ENCODE measurements at regions of chr6 and their contacts with region 1.

Region 1: GRCh38 chr6:5058254-5058653 is 26.9 kb upstream of the PPP1R3G start:
- DNase-seq: no peak

Region 2: GRCh38 chr6:4901386-4902061 is 156.7 kb before region 1 on chr6:
- intact Hi-C with region 1: no loop called
- DNase-seq: no peak

Region 3: DNA sequence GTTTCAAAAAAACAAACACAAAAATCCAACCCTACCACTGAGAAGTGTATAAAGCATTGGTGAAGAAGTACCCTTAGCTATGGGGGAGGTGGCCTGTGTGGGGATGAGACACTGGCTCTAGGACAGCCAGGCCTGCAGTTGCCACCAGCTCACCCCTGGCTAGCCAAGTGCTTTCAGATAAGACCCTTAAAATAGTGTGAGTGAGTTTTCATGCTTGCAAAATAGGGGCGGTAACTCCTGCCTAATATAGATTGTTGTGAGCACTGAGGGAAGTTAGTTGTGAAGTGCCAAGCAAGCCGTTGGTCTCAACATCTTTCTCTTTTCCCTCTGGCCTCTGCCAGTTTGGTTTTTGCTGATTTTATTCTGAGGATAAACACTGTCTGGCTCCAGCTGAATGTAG is 38.2 kb after region 1 on chr6:
- intact Hi-C with region 1: no loop called
- DNase-seq: no peak

Region 4: GRCh38 chr6:5115168-5115567 is 56.9 kb after region 1 on chr6:
- intact Hi-C with region 1: loop called (anchors 5 kb)
- DNase-seq: no peak

Region 5: DNA sequence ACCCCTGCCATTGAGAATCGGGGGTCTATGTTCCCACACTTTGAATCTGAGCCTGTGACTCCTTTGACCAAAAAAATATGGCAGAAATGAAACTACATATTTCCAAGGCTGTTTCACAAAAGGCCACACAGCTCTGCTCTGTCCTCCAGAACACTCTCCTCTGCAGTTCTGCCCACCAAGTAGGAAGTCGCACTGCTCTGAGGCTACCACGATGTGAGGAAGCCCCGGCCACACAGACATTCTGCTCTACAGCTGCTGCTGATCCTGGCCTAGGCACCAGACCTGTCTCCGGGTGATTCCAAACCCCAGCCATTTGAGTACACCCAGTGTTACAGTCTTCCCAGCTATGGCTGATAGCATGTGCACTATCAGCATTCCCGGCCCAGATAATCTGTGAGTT is 117.4 kb after region 1 on chr6:
- intact Hi-C with region 1: no loop called
- DNase-seq: no peak

Region 6: DNA sequence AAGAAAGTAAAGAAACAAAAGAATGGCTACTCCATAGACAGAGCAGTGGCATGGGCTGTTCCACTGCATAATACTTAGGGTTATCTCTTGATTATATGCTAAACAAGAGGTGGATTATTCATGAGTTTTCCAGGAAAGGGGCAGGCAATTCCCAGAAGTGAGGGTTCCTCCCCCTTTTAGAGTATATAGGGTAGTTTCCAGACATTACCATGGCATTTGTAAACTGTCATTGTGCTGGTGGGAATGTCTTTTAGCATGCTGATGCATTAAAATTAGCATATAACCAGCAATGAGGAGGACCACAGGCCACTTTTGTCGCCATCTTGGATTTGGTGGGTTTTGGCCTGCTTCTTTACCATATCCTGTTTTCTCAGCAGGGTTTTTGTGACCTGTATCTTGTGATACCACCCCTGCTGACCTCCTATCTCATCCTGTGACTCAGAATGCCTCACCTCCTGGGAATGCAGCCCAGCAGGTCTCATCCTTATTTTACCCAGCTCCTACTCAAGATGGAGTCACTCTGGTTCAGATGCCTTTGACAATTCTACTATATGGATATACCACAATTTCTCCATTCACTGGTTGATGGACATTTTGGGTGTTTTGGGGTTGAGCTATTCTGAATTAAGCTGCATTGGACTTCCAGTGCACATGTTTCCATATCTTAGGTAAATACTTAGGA is 483.6 kb after region 1 on chr6:
- intact Hi-C with region 1: no loop called
- DNase-seq: no peak